Mammary epithelial cell (primary cell): ENCODE measurements at regions of chr3 and their contacts with region 1.

Region 1: GRCh38 chr3:194112120-194113106 is 23.5 kb upstream of the HES1 start:
- DNase-seq: peak; percentile 87
- H3K4me3 ChIP-seq: no peak overlapping the region
- H3K27ac ChIP-seq: no peak overlapping the region
- H3K4me1 ChIP-seq: peaks cover 8% of the 10 kb centered on the region
- H3K27me3 ChIP-seq: no peaks in the 10 kb centered on the region
- CTCF ChIP-seq: no peak

Region 2: GRCh38 chr3:193842029-193842798 is 270.2 kb before region 1 on chr3:
- CTCF ChIA-PET with region 1: no interaction called
- dilution Hi-C with region 1: no loop called
- in situ Hi-C with region 1: no loop called
- intact Hi-C with region 1: no loop called
- DNase-seq: no peak
- H3K4me3 ChIP-seq: no peak overlapping the region
- H3K27ac ChIP-seq: no peak overlapping the region
- H3K4me1 ChIP-seq: peaks cover 4% of the 10 kb centered on the region
- H3K27me3 ChIP-seq: no peaks in the 10 kb centered on the region
- CTCF ChIP-seq: no peak

Region 3: DNA sequence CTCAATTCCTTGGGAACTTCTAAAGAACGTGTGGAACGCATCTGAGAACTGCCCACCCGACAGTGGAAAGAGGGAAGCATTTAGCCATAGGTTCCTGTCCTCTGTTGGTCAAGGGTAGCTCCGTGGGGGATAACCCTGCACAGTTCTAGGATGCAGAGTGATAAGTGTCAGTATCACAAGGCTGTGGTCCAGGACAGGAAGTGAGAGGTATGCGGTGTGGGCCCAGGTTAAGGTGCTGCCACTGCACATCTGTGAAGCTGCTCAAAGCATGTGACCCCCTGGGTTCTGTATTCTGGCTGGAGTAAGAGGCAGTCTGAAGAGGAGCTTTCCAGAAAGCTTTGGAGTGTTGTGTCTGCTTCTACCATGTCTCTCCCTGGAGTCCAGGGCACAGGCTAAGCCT is 28.1 kb before region 1 on chr3:
- CTCF ChIA-PET with region 1: no interaction called
- dilution Hi-C with region 1: loop called (anchors 5 kb)
- in situ Hi-C with region 1: no loop called
- intact Hi-C with region 1: no loop called
- DNase-seq: no peak
- H3K4me3 ChIP-seq: no peak overlapping the region
- H3K27ac ChIP-seq: no peak overlapping the region
- H3K4me1 ChIP-seq: peaks cover 9% of the 10 kb centered on the region
- H3K27me3 ChIP-seq: no peaks in the 10 kb centered on the region
- CTCF ChIP-seq: no peak

Region 4: DNA sequence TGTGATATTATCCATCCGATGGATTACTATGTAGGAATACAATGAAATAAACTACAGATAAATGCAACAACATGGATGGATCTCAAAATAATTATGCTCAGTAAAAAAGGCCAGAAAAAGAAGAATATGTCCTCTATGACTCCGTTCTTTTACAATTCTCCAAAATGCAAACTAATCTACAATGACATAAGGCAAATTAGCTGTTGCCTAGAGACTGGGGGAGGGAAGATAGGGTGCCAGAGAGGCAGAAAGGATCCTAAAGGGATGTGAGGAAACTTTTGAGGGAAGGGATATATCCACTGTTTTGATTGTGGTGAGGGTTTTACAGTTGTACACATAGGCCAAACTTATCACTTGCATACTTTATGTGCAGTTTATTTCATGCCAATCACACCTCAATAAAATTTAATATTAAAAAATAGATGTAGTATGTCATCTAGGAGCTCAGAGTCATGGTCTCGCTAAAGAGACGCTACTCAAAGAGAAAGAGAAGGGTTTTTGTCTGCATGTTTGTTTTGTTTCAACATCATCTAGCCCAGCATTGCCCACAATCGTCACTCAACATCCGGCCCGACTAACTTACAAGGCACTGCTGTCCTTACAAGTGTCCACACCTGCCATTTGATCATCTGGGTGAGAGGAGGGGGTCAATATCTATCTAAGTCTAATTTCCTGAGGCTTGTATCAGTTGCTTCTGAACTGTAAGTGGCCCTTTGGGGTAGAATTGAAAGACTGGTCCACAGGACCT is 53.0 kb after region 1 on chr3:
- CTCF ChIA-PET with region 1: no interaction called
- dilution Hi-C with region 1: no loop called
- in situ Hi-C with region 1: no loop called
- intact Hi-C with region 1: no loop called
- DNase-seq: no peak
- H3K4me3 ChIP-seq: no peak overlapping the region
- H3K27ac ChIP-seq: no peak overlapping the region
- H3K4me1 ChIP-seq: peaks cover 14% of the 10 kb centered on the region
- H3K27me3 ChIP-seq: no peaks in the 10 kb centered on the region
- CTCF ChIP-seq: no peak

Region 5: DNA sequence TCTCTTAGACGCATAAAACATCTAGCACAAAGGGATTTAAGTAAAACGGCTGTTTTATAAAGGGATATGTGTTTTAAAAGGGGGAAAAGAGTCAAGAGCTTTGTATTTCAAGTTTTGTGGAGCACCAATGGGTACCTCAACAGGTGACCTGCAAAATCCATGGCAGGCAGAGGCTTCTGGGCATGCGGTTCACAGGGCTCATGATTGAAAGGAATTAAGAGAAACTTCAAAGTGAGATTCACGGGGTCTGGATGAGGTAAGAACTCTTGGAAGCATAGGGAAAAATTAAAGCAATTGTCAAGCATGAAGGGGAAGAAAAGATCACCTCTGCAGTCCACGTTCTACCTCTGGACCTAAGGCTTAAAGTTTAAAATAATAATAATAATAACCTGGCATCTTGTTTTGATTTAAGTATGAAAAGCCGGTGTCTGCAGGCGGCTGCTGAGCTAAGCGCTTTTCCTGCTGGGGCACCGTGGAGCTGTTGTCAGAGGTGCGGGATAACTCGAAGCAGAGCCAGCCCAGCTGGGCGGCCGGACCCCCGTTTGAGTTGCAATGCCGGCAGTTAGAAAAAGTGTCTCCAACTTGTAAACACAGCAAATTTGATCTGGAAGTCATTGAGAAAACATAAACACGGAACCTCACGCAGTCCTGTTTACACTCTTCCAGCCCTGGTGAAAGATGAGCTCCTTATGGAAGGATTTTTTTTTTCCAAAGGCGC is 64.0 kb after region 1 on chr3:
- CTCF ChIA-PET with region 1: no interaction called
- dilution Hi-C with region 1: no loop called
- in situ Hi-C with region 1: no loop called
- intact Hi-C with region 1: no loop called
- DNase-seq: no peak
- H3K4me3 ChIP-seq: no peak overlapping the region
- H3K27ac ChIP-seq: no peak overlapping the region
- H3K4me1 ChIP-seq: no peaks in the 10 kb centered on the region
- H3K27me3 ChIP-seq: no peaks in the 10 kb centered on the region
- CTCF ChIP-seq: no peak